Right cardiac atrium (tissue), 5 donors: ENCODE measurements at regions of chr5 and their contacts with region 1.

Region 1: DNA sequence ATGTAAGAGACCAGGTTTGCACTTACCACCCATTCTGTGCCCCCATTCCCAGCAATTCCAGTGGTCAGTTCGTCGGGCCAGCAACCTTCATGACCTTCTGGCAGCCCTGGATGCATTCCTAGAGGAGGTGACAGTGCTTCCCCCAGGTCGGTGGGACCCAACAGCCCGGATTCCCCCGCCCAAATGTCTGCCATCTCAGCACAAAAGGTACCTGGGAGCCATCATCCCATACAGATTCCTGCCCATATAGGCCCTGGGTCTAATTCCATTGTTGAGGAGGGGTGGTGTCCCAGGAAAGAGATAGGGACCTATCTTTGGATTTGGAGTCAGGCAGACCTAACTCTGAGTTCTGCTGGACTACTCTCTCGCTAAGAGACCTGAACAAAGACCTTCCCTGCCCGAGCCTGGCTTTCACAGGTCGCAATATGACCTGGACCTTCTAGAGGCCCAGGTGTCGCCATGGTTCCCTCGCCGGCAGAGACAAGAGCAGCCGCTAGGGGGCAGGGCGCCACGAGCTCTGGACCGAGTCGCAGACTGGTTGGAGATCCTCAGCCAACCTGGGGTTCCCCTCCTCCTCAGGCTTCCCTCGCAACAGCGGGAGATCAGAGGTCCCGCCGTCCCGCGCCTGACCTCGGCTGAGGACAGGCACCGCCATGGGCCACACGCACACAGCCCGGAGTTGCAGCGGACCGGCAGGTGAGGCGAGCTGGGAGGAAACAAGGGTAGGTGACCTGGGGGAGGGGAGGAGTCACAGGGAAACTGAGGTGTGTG is 3.1 kb downstream of the SLC4A9 start:
- DNase-seq: peak; percentile 79 to 90 (median 90)
- ATAC-seq: peak; percentile 64 to 71
- H3K4me3 ChIP-seq: no peak overlapping the region
- H3K27ac ChIP-seq: no peak overlapping the region
- H3K4me1 ChIP-seq: no peaks in the 10 kb centered on the region
- H3K27me3 ChIP-seq: no peaks in the 10 kb centered on the region

Region 2: GRCh38 chr5:140710899-140711552 is 348.0 kb after region 1 on chr5:
- intact Hi-C with region 1: loop called in 1 of 4 experiments (anchors 10 kb)
- DNase-seq: peak; percentile 86 to 93 (median 92)
- ATAC-seq: peak; percentile 96 to 97
- H3K4me3 ChIP-seq: peak overlapping the region; percentile 85
- H3K27ac ChIP-seq: peak overlapping the region; percentile 99
- H3K4me1 ChIP-seq: no peaks in the 10 kb centered on the region
- H3K27me3 ChIP-seq: no peaks in the 10 kb centered on the region

Region 3: DNA sequence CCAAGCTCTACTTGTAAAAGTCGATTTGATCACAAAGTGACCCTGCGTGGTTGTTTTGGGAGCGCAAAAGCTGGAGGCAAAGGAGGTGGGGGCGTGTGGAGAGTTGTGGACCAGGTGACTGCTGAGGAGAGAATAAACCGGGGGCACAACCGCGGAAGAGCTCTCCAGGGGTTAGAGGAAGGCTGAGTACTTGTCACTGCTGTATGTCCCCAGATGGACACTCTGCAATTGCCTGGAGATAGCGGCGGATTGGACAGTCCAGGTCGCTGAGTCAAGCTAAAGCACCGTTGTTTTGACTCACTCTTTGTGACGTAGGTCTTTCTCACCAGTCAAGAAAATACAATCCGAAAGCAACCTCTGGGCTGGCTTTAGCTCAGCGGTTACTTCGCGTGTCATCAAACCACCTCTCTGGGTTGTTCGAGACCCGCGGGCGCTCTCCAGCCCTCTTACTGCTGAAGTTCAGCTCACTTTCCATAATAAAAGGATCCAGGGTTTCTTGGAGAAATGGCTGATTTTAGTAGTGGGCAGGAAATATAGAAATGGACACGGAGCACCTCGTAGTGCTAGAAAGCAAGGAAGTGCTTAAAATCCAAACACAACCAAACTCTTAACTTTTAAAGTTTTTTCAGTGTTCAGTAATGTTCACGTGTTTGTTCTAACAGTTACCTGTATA is 362.9 kb after region 1 on chr5:
- intact Hi-C with region 1: loop called in 1 of 4 experiments (anchors 10 kb)
- DNase-seq: peak; percentile 39 to 66 (median 63)
- ATAC-seq: peak; percentile 60 to 89
- H3K4me3 ChIP-seq: no peak overlapping the region
- H3K27ac ChIP-seq: no peak overlapping the region
- H3K4me1 ChIP-seq: no peaks in the 10 kb centered on the region
- H3K27me3 ChIP-seq: no peaks in the 10 kb centered on the region